HCT116 (cell line): ENCODE measurements at regions of chr12 and their contacts with region 1.

Region 1: DNA sequence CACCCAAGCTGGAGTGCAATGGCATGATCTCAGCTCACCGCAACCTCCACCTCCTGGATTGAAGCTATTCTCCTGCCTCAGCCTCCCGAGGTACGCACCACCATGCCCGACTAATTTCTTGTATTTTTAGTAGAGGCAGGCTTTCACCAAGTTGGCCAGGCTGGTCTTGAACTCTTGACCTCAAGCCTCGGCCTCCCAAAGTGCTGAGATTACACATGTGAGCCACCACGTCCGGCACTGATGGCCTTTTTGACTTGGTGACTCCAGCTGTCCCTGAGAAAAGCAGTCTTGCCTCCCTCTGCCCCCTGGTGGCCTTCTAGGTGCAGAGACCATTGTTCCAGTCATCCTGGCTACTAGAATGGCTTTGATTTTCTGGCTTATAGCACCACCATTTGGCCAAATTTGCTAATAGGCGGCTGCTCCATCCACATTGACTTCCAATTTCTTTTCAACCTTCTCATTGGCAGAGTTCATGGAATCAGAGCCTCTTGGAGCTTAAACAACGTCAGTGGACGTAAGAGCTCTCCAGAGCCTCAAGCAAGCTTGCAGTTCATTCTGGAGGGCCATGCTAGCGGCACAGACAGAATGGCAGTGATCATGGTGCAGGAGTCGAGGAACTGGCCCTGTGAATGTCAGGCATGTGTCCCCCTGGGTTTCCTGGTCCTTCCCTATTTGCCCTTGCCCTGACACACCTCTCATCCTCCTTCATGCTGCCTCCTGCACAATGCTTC is 25.4 kb upstream of the EIF4B start:
- DNase-seq: peak; percentile 98
- ATAC-seq: peak; percentile 81
- H3K4me3 ChIP-seq: no peak overlapping the region
- H3K27ac ChIP-seq: peak overlapping the region; percentile 6; the same call in 1 of the 2 replicates
- H3K4me1 ChIP-seq: peaks cover 15 to 25% of the 10 kb centered on the region in 2 experiments; a peak in 3 of 4 replicates
- H3K27me3 ChIP-seq: no peaks in the 10 kb centered on the region
- CTCF ChIP-seq: peak in 2 of 3 experiments; percentile 98 to 100; a peak in 4 of 6 replicates
- POLR2A ChIP-seq: no peak
- RAD21 ChIP-seq: no peak

Region 2: GRCh38 chr12:52372216-52373154 is 608.4 kb before region 1 on chr12:
- CTCF ChIA-PET with region 1: interaction called, 10 read pairs
- POLR2A ChIA-PET with region 1: no interaction called
- RAD21 ChIA-PET with region 1: no interaction called
- intact Hi-C with region 1: loop called (anchors 2 kb)
- DNase-seq: peak; percentile 79
- ATAC-seq: peak; percentile 96
- H3K4me3 ChIP-seq: no peak overlapping the region
- H3K27ac ChIP-seq: no peak overlapping the region
- H3K4me1 ChIP-seq: peaks cover 0 to 2% of the 10 kb centered on the region in 2 experiments; a peak in 1 of 4 replicates
- H3K27me3 ChIP-seq: no peaks in the 10 kb centered on the region
- CTCF ChIP-seq: peak; percentile 82 to 97 (median 84)
- POLR2A ChIP-seq: no peak
- RAD21 ChIP-seq: peak; percentile 96

Region 3: DNA sequence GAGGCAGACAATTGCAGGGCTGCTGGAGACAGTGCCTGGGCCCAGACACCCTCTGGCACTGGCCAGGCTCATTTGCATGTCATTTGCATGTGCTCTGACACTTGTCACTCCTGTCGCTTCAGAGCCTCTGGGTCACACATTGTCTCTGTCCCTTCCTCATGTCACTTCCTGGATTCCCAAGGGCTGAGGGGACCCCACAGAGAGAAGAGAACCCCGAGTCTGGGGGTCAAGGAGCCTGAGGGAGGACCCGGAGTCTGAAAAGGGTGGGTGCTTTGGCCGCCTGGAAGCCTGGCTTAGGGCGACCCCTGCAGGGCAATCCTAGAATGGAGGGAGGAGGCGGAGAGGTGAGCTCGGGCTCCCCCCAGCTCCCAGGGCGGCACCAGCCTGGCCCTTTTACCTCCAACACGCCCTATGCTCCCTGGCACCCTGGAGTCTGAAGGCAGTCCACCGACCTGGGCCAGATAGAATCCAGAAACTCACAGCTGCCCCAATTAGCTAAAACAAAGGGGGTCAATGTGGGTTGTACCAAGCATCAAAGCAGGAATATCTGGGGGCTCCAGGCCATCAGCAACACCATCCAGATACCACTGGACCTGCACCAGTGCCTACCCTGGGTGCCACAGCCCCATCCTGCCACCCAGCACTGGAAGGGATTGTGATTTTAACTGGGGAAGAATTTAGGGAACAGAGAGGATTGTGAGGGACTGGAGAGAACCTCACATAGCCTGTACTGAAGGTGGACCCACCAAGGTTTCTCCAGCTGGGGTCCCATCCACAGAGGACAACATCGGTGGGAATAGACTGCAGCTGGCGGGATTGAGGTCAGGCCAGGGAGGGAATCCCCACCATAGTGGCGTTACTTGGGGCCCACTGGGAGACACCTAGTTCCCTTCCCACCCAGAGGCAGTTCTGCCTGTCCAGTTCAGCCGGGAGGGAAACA is 110.2 kb before region 1 on chr12:
- CTCF ChIA-PET with region 1: interaction called, 14 read pairs
- POLR2A ChIA-PET with region 1: no interaction called
- RAD21 ChIA-PET with region 1: interaction called in 1 of 2 experiments, 3 read pairs
- intact Hi-C with region 1: no loop called
- DNase-seq: no peak
- ATAC-seq: peak; percentile 71
- H3K4me3 ChIP-seq: 0 out of 4 replicates have a peak overlapping the region, but pooled peaks of 1 of the 2 experiments have one; percentile 16
- H3K27ac ChIP-seq: peak overlapping the region; percentile 81
- H3K4me1 ChIP-seq: peaks cover 48 to 64% of the 10 kb centered on the region in 2 experiments
- H3K27me3 ChIP-seq: no peaks in the 10 kb centered on the region
- CTCF ChIP-seq: peak in 2 of 3 experiments; percentile 89 to 96; a peak in 4 of 6 replicates
- POLR2A ChIP-seq: no peak
- RAD21 ChIP-seq: no peak

Region 4: GRCh38 chr12:52895061-52895887 is 85.6 kb before region 1 on chr12:
- CTCF ChIA-PET with region 1: interaction called, 370 read pairs
- POLR2A ChIA-PET with region 1: interaction called, 28 read pairs
- RAD21 ChIA-PET with region 1: interaction called, 3 to 9 read pairs
- intact Hi-C with region 1: no loop called
- DNase-seq: no peak
- ATAC-seq: peak; percentile 50
- H3K4me3 ChIP-seq: no peak overlapping the region
- H3K27ac ChIP-seq: peak overlapping the region; percentile 67
- H3K4me1 ChIP-seq: peaks cover 41 to 47% of the 10 kb centered on the region in 2 experiments
- H3K27me3 ChIP-seq: no peaks in the 10 kb centered on the region
- CTCF ChIP-seq: no peak
- POLR2A ChIP-seq: no peak
- RAD21 ChIP-seq: no peak

Region 5: GRCh38 chr12:52949413-52950331 is 31.2 kb before region 1 on chr12:
- CTCF ChIA-PET with region 1: interaction called, 11 read pairs
- POLR2A ChIA-PET with region 1: interaction called, 14 read pairs
- RAD21 ChIA-PET with region 1: interaction called in 1 of 2 experiments, 8 read pairs
- intact Hi-C with region 1: no loop called
- DNase-seq: peak; percentile 84
- ATAC-seq: peak; percentile 61
- H3K4me3 ChIP-seq: peak overlapping the region; percentile 72 to 96
- H3K27ac ChIP-seq: peak overlapping the region; percentile 78
- H3K4me1 ChIP-seq: peaks cover 66 to 87% of the 10 kb centered on the region in 2 experiments
- H3K27me3 ChIP-seq: no peaks in the 10 kb centered on the region
- CTCF ChIP-seq: no peak
- POLR2A ChIP-seq: peak; percentile 90
- RAD21 ChIP-seq: no peak